ENCODE measurements at regions of chr5 and their contacts with region 1.

Region 1: DNA sequence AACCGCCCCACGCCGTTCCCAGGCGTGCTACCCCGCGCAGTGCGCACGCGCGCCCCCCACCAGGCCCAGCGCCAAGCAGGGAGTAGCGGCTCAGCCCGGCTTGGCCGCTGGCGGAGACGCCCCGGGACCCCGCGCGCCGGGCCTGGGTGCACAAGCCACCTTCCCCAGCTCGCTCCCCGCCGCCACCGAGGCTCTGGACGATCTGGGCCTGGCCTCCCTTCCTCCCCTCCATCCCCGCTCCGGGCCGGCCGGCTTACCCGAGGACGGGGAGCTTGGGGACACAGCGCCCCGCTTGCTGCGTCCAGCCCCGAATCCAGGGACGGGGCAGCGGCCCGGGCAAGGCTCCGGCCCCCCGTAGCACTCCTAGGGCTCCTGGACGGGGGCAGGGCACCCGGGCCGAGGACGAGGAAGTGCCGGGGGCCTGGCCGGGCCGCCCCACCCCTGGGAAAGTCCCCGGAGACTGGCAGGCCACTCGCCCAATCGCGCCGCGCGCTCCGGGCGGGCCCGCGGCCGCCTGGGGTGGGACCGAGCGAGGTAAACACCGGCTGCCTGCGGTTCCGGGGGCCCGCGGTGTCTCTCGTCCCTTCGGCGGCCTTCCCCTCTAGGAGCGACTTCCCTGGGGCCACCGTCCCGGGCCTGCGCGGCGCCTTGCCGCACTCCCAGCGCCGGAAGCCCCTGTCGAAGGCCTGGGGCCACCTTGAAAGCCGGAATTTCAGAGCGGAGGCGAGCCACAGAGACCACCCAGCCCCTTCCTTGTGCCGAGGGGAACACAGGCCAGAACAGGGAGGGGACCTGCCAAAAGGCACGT is at the start of gene TNIP1:
- DNase-seq: peak; percentile 53 to 92
- H3K4me3 ChIP-seq: peak within 1 kb of the TSS; percentile 71 to 93 (median 80)
- H3K27ac ChIP-seq: peak within 1 kb of the TSS; percentile 71
- H3K4me1 ChIP-seq: peaks cover 1 to 6% (median 4%) of the 10 kb centered on the region in 4 experiments
- H3K27me3 ChIP-seq: no peaks in the 10 kb centered on the region
- CTCF ChIP-seq: no peak
- EP300 ChIP-seq: no peak
- POLR2A ChIP-seq: peak; percentile 22 to 31; a peak in 1 of 3 replicates
- RAD21 ChIP-seq: no peak
- total RNA-seq, gene TNIP1: 31.9 and 33.9 TPM in 2 replicates

Region 2: DNA sequence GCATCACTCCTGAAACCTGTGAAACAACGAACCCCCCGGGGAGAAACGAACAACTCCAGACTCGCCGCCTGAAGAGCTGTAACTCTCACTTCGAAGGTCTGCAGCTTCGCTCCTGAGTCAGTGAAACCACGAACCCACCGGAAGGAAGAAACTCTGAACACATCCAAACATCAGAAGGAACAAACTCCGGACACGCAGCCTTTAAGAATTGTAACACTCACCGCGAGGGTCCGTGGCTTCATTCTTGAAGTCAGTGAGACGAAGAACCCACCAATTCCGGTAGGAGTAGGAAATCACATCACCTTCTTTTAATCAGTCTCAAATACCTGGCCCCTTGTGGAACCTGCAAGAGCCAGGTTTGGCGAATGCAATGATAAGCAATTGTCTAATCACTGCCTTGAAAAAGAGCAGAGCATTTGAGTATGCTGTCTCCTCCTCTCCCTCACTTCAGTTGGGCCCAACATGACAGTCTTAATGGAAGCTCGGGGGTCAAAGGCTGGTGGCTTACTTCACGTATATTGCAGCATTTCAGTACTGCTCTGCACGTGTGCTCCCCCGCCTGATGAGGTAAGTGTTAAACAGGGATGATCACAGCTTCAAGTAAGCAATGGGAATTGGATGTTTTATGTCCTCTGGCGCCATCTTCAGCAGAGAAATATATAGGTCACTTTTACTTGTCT is 234.0 kb before region 1 on chr5:
- CTCF ChIA-PET with region 1: no interaction called
- POLR2A ChIA-PET with region 1: no interaction called
- DNase-seq: peak; percentile 27 to 51
- H3K4me3 ChIP-seq: no peak overlapping the region
- H3K27ac ChIP-seq: no peak overlapping the region
- H3K4me1 ChIP-seq: peaks cover 0 to 3% (median 0%) of the 10 kb centered on the region in 4 experiments; a peak in 1 of 7 replicates
- H3K27me3 ChIP-seq: peaks cover 0 to 5% (median 4%) of the 10 kb centered on the region in 4 experiments; a peak in 4 of 7 replicates
- CTCF ChIP-seq: peak in 2 of 3 experiments; percentile 80; a peak in 3 of 4 replicates
- EP300 ChIP-seq: no peak
- POLR2A ChIP-seq: no peak
- RAD21 ChIP-seq: peak; percentile 89 to 93

Region 3: GRCh38 chr5:151068433-151069197 is 12.2 kb before region 1 on chr5:
- CTCF ChIA-PET with region 1: interaction called, 18 read pairs
- POLR2A ChIA-PET with region 1: interaction called, 3 read pairs
- DNase-seq: no peak
- H3K4me3 ChIP-seq: no peak overlapping the region
- H3K27ac ChIP-seq: no peak overlapping the region; the same call in 1 of the 2 replicates
- H3K4me1 ChIP-seq: peaks cover 0 to 10% (median 5%) of the 10 kb centered on the region in 4 experiments; a peak in 4 of 7 replicates
- H3K27me3 ChIP-seq: no peaks in the 10 kb centered on the region
- CTCF ChIP-seq: no peak
- EP300 ChIP-seq: no peak
- POLR2A ChIP-seq: no peak
- RAD21 ChIP-seq: no peak

Region 4: GRCh38 chr5:151093476-151093889 is 12.7 kb after region 1 on chr5:
- CTCF ChIA-PET with region 1: interaction called, 15 read pairs
- POLR2A ChIA-PET with region 1: interaction called, 5 read pairs
- DNase-seq: no peak
- H3K4me3 ChIP-seq: no peak overlapping the region
- H3K27ac ChIP-seq: no peak overlapping the region
- H3K4me1 ChIP-seq: peaks cover 1 to 20% (median 11%) of the 10 kb centered on the region in 4 experiments; a peak in 4 of 7 replicates
- H3K27me3 ChIP-seq: no peaks in the 10 kb centered on the region; a peak in 2 of 7 replicates
- CTCF ChIP-seq: no peak
- EP300 ChIP-seq: no peak
- POLR2A ChIP-seq: no peak
- RAD21 ChIP-seq: no peak

Region 5: DNA sequence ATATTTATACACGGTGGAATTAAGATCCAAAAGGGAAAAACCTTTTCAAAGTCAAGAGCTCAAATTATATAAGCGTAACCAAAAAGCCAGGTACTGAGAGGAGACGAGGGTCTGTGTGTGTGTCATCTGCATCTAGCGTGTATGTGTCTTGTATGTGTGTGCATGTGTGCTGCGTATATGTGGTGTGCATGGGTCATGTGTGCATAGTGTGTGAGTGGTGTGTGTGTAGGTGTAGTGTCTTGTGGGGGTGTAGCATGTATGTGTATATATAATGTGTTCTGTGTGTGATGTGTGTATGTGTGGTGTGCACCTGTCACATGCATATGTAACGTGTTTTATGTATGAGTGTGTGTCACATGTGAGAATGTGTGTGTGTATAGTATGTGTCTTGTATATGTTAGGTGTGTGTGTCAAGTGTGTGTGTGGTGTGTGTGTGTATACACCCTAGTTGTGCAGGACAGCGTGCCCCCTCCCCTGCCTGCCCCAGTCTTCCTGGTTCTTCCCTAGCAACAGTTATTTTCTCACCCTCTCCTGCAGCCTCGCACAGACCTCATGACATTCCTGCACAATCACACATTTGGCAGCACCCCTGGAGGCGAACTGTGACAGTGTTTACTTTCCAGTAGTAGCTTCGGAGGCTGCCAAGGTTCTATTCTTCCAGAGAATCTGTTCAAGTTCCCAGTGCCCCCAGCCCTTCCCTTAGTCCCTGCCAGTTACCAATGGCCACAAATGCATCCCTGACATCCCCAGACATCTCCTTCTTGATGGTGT is 27.1 kb after region 1 on chr5:
- CTCF ChIA-PET with region 1: interaction called, 172 read pairs
- POLR2A ChIA-PET with region 1: interaction called, 3 read pairs
- DNase-seq: no peak
- H3K4me3 ChIP-seq: no peak overlapping the region
- H3K27ac ChIP-seq: no peak overlapping the region
- H3K4me1 ChIP-seq: no peaks in the 10 kb centered on the region
- H3K27me3 ChIP-seq: no peaks in the 10 kb centered on the region; a peak in 1 of 7 replicates
- CTCF ChIP-seq: no peak
- EP300 ChIP-seq: no peak
- POLR2A ChIP-seq: no peak
- RAD21 ChIP-seq: no peak

Region 6: DNA sequence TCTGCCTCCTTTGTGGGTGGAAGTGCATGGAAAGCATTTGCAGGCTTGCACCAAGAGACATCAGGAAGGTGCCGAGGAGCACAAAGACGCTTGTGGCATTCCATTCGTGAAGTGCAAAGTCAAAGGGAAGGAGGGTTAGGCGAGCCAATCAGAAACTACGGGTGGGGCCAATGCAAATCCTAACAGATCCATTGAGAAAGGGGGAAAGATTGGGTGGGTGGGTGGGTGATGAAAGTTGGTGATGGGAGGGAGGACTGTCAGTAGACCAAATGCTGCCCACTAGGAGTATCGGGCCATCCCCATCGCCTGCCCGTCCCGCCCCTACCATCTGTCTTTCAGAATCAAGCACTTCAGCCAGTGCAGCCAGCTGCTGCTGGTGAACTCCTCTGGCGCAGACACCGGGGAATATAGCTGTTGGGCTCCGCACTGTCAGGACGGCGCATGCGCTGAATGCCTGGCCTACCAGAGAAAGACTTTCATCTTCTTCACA is 93.8 kb after region 1 on chr5:
- CTCF ChIA-PET with region 1: no interaction called
- POLR2A ChIA-PET with region 1: no interaction called
- DNase-seq: no peak
- H3K4me3 ChIP-seq: no peak overlapping the region
- H3K27ac ChIP-seq: no peak overlapping the region
- H3K4me1 ChIP-seq: peaks cover 0 to 11% (median 0%) of the 10 kb centered on the region in 4 experiments; a peak in 1 of 7 replicates
- H3K27me3 ChIP-seq: no peaks in the 10 kb centered on the region
- CTCF ChIP-seq: no peak
- EP300 ChIP-seq: no peak
- POLR2A ChIP-seq: no peak
- RAD21 ChIP-seq: no peak

Measured in H1 (cell line).